CD8-positive, alpha-beta memory T cell (primary cell): ENCODE measurements at regions of chr6 and their contacts with region 1.

Region 1: GRCh38 chr6:90440586-90441283 is 144.1 kb upstream of the BACH2 start:
- DNase-seq: no peak
- H3K4me3 ChIP-seq: no peak overlapping the region
- H3K4me3 Mint-ChIP-seq: no peak overlapping the region
- H3K27ac ChIP-seq: no peak overlapping the region
- H3K27ac Mint-ChIP-seq: no peak overlapping the region
- H3K4me1 ChIP-seq: no peaks in the 10 kb centered on the region
- H3K4me1 Mint-ChIP-seq: peaks cover 2 to 10% (median 3%) of the 10 kb centered on the region in 3 donors
- H3K27me3 ChIP-seq: no peaks in the 10 kb centered on the region
- H3K27me3 Mint-ChIP-seq: peaks cover 1 to 2% of the 10 kb centered on the region in 2 donors

Region 2: GRCh38 chr6:90144396-90144795 is 296.3 kb before region 1 on chr6:
- CTCF ChIA-PET with region 1: no interaction called
- POLR2A ChIA-PET with region 1: interaction called, 12 read pairs
- DNase-seq: no peak
- H3K4me3 ChIP-seq: no peak overlapping the region
- H3K4me3 Mint-ChIP-seq: no peak overlapping the region
- H3K27ac ChIP-seq: no peak overlapping the region
- H3K27ac Mint-ChIP-seq: peak overlapping the region in 1 of 8 donors; percentile 42
- H3K4me1 ChIP-seq: peaks cover 29% of the 10 kb centered on the region
- H3K4me1 Mint-ChIP-seq: peaks cover 5 to 13% (median 11%) of the 10 kb centered on the region in 3 donors
- H3K27me3 ChIP-seq: no peaks in the 10 kb centered on the region
- H3K27me3 Mint-ChIP-seq: peaks cover 3 to 6% of the 10 kb centered on the region in 2 donors

Region 3: GRCh38 chr6:90631046-90631445 is 190.3 kb after region 1 on chr6:
- CTCF ChIA-PET with region 1: no interaction called
- POLR2A ChIA-PET with region 1: no interaction called
- DNase-seq: no peak
- H3K4me3 ChIP-seq: no peak overlapping the region
- H3K4me3 Mint-ChIP-seq: no peak overlapping the region
- H3K27ac ChIP-seq: no peak overlapping the region
- H3K27ac Mint-ChIP-seq: no peak overlapping the region
- H3K4me1 ChIP-seq: no peaks in the 10 kb centered on the region
- H3K4me1 Mint-ChIP-seq: no peaks in the 10 kb centered on the region
- H3K27me3 ChIP-seq: no peaks in the 10 kb centered on the region
- H3K27me3 Mint-ChIP-seq: peaks cover 13 to 17% of the 10 kb centered on the region in 2 donors